ENCODE measurements at regions of chr2 and their contacts with region 1.

Region 1: GRCh38 chr2:215949991-215950404 is 63.4 kb downstream of the MREG start:
- DNase-seq: no peak
- ATAC-seq: no peak

Region 2: DNA sequence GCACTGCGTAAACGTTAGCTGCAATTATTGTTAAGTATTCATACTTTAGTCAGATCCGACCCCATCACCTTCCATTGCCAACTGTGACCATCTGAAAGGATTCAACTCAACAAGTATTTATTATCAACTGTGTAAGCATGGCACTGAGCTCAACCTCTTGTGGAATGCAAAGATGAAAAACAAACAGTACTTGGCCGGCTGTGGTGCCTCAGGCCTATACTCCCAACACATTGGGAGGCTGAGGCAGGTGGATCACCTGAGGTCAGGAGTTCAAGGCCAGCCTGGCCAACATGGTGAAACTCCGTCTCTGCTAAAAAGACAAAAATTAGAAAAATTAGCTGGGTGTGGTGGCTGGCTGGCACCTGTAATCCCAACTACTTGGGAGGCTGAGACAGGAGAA is 71.8 kb after region 1 on chr2:
- intact Hi-C with region 1: loop called (anchors 2 kb)
- DNase-seq: no peak
- ATAC-seq: no peak